ENCODE measurements at regions of chr2 and their contacts with region 1.

Region 1: DNA sequence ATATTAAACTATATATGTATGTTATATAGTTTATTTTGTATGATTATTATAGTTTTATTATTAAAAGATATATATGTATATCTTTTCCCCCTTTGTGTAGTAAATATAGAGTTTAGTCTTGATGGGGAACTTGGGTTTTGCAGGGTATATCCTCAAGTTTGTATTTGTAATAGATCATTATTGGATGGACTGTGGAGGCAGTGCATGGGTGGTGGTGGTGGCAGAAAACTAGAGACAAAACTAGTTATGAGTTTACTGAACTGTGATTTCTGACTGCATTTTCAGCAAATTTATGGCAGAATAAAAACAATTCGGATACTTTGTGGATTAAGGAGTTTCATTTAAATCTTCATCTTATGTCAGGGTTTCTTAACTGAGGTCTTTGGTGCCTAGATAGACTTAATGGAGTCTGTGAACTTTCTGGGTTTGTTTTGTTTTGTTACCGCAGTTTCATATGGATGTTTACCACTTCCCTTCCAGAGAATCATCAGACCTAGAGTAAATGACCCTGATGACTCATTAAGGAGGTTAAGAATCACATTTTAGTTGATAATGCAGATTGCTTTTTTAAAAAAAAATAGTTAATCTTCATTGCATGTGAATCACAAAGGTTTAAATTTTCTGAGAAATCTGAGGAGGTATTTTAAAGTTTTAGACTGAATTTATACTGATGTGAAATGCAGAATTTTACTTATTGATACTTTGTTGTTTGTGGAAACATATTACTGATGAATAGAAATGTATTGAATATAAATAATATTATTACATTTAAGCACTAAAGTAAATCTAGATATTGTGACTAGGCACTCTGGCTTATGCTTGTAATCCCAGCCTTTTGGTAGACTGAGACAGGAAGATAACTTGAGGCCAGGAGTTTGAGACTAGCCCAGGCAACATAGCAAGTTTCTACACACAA is 14.5 kb downstream of the EPC2 start:
- DNase-seq: peak; percentile 71
- H3K4me3 Mint-ChIP-seq: peak overlapping the region; percentile 65
- H3K27ac Mint-ChIP-seq: peak overlapping the region; percentile 87
- H3K4me1 Mint-ChIP-seq: peaks cover 45% of the 10 kb centered on the region
- H3K27me3 Mint-ChIP-seq: no peaks in the 10 kb centered on the region

Region 2: GRCh38 chr2:148594198-148594597 is 64.9 kb before region 1 on chr2:
- intact Hi-C with region 1: no loop called
- DNase-seq: no peak
- H3K4me3 Mint-ChIP-seq: no peak overlapping the region
- H3K27ac Mint-ChIP-seq: no peak overlapping the region
- H3K4me1 Mint-ChIP-seq: peaks cover 3% of the 10 kb centered on the region
- H3K27me3 Mint-ChIP-seq: peaks cover 3% of the 10 kb centered on the region

Region 3: DNA sequence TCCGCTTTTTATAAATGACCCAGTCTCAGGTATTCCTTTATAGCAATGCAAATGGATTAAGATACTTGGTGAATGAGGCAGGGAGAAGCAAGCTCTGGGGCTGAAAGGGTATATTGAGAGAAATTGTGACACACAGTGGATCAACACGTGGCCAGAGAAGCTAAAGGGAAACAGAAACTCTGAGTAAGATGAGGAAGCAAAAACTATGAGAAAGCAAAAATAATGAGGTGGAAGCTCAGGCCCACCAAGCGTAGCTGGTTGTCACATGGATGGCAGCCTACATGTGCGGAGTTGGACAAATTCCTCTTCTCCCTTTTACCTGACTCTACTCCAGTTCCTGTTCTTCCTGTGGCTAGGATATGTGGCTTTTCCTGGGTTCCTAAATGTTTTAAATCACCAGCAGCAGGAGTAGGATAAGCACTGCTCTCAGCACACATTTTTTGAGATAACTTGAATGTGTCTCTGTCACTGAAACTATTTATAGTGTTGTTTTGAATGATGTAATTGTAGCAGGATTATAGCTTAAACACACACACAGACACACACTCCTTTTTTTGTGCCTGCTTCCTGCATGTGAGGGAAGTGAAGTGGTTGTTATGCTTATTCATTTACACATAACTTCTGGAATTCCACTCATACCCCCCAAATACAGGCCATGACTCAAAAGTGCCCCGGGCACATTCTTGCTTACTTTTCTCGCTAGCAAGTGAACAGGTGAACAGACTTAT is 44.6 kb before region 1 on chr2:
- intact Hi-C with region 1: loop called (anchors 1 kb)
- DNase-seq: peak; percentile 67
- H3K4me3 Mint-ChIP-seq: peak overlapping the region; percentile 32
- H3K27ac Mint-ChIP-seq: peak overlapping the region; percentile 62
- H3K4me1 Mint-ChIP-seq: peaks cover 13% of the 10 kb centered on the region
- H3K27me3 Mint-ChIP-seq: no peaks in the 10 kb centered on the region

Region 4: DNA sequence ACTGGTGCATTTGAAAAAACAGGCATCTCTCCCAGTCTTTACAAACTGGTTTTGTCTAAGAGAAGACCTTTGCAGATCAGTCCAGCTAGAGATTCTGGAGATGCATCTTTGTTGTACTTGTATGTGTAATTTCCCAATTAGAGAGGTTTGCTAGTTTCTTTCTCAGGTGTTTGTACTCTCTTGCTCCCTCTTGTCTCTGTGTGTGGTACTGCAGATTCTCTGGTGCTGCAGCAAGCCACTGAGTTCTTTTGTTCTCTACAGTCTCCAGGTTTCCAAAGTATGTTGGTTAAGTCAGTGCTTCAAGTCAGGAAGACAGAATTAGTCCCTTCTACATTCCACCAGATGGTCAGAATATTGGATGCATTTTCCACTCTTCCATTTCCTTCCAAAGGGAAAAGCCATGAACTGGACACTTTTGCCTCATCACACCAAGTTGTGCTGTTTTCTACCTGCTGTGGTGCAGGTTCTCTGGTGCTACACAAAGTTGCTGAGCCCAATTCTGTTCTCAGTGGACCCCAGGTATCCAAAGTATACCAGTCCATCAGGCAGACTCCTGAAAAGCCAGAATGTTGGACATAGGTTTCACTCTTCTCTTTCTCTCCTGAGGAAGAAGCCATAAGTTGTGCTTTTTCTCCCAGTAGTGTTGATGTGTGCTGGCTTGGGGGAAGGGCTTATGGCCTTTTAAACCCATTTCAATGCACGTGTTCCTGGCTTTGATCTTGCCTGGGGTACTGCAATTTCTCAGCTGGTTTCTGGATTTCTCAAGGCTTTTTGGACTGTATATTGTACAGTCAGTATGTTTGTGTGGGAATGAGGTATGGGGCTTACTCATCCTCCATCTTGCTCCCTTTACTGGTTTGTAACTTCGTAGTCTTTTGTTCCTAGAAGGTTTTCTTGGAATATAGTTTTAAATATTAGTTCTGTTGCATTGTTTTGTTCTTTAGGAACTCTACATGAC is 15.3 kb after region 1 on chr2:
- intact Hi-C with region 1: loop called (anchors 1 kb)
- DNase-seq: peak; percentile 83
- H3K4me3 Mint-ChIP-seq: no peak overlapping the region
- H3K27ac Mint-ChIP-seq: no peak overlapping the region
- H3K4me1 Mint-ChIP-seq: peaks cover 24% of the 10 kb centered on the region
- H3K27me3 Mint-ChIP-seq: no peaks in the 10 kb centered on the region

Region 5: GRCh38 chr2:148726228-148726627 is 67.2 kb after region 1 on chr2:
- intact Hi-C with region 1: loop called (anchors 5 kb)
- DNase-seq: no peak
- H3K4me3 Mint-ChIP-seq: no peak overlapping the region
- H3K27ac Mint-ChIP-seq: no peak overlapping the region
- H3K4me1 Mint-ChIP-seq: peaks cover 25% of the 10 kb centered on the region
- H3K27me3 Mint-ChIP-seq: no peaks in the 10 kb centered on the region